ENCODE measurements at regions of chr5 and their contacts with region 1.

Region 1: DNA sequence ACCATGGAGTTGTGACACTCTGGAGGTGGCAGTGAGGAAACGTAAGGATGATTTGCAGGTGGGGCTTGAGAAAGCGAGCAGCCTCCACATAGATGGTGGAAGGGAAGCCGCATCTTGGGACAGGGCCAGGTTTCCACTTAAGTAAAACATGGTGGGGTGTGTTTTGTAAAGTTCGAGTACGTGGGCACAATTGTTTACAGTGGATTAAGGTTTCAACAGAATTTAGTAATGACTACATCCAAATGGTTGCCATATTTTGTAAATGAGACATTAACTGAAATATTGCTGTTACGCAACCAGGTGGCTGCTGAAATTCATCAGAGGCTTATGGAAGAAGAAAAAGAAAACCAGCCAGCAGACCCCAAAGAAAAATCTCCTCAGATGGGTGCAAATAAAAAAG is 85.4 kb upstream of the IL7R start:
- DNase-seq: no peak
- H3K4me3 Mint-ChIP-seq: no peak overlapping the region
- H3K27ac Mint-ChIP-seq: no peak overlapping the region
- H3K4me1 Mint-ChIP-seq: peaks cover 33% of the 10 kb centered on the region
- H3K27me3 Mint-ChIP-seq: no peaks in the 10 kb centered on the region

Region 2: DNA sequence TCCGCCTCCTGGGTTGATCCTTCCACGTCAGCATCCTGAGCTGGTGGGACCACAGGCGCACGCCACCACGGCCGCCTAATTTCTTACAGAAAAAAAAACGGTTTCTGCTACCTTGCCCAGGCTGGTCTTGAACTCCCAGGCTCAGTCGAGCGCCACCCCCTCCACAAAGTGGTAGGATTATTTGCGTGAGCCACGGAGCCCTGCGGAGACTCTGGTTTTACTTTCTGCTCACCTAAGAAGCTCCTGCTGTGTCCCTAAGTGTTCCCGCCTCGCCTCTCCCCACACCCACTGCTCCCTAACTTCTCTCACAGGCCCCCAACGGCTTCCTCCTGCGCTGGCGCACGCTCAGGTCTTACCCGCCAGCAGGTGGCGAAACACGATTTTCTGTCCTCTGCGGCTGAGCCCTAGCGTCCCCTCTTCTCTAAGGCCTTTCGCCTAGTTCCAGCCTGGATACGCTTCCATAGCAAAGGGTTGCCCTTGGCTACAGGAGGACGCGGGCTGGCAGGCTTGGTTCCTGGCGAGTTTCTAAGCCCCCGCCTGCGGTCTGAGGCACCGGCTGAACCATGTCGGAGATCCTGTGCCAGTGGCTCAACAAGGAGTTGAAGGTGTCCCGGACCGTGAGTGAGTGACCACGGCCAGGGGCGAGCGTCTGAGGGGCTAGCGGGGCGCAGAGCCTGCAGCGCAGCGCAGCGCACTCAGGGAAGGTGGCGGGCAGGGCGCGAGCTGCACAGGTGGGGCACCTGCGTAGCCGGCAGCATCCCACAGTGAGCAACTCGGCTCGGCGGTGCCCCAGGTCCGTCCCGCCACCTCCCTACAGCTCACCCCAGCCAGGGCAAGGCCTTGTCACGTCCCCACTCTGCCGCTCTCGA is 153.6 kb before region 1 on chr5 and contains the start of gene SPEF2:
- intact Hi-C with region 1: loop called (anchors 1 kb)
- DNase-seq: peak; percentile 77
- H3K4me3 Mint-ChIP-seq: peak within 1 kb of the TSS; percentile 89
- H3K27ac Mint-ChIP-seq: peak within 1 kb of the TSS; percentile 95
- H3K4me1 Mint-ChIP-seq: peaks cover 28% of the 10 kb centered on the region
- H3K27me3 Mint-ChIP-seq: no peaks in the 10 kb centered on the region
- total RNA-seq, gene SPEF2: 10.0 and 11.5 TPM in 2 replicates

Region 3: GRCh38 chr5:35665096-35665495 is 106.2 kb before region 1 on chr5:
- intact Hi-C with region 1: loop called (anchors 5 kb)
- DNase-seq: no peak
- H3K4me3 Mint-ChIP-seq: no peak overlapping the region
- H3K27ac Mint-ChIP-seq: no peak overlapping the region
- H3K4me1 Mint-ChIP-seq: peaks cover 29% of the 10 kb centered on the region
- H3K27me3 Mint-ChIP-seq: peaks cover 3% of the 10 kb centered on the region

Region 4: DNA sequence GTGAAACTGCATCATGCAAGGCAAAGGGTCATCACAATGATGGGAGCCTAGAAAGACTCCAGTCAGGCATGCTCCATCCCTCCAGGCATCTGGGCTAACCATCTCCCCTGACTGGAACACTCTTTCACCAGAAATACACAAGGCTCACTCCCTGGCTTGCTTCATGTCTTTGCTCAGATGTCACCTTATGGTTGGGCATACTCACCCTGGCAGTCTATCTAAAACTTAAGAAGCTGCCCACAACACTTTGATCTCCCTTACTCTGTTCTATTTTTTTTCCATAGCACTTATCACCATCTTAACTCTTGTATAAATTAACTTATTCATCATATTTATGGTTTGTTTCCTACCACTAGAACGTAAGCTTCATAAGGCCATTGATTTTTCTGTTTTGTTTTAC is 63.6 kb before region 1 on chr5:
- intact Hi-C with region 1: no loop called
- DNase-seq: no peak
- H3K4me3 Mint-ChIP-seq: no peak overlapping the region
- H3K27ac Mint-ChIP-seq: no peak overlapping the region
- H3K4me1 Mint-ChIP-seq: no peaks in the 10 kb centered on the region
- H3K27me3 Mint-ChIP-seq: no peaks in the 10 kb centered on the region